ENCODE measurements at regions of chr1 and their contacts with region 1.

Region 1: DNA sequence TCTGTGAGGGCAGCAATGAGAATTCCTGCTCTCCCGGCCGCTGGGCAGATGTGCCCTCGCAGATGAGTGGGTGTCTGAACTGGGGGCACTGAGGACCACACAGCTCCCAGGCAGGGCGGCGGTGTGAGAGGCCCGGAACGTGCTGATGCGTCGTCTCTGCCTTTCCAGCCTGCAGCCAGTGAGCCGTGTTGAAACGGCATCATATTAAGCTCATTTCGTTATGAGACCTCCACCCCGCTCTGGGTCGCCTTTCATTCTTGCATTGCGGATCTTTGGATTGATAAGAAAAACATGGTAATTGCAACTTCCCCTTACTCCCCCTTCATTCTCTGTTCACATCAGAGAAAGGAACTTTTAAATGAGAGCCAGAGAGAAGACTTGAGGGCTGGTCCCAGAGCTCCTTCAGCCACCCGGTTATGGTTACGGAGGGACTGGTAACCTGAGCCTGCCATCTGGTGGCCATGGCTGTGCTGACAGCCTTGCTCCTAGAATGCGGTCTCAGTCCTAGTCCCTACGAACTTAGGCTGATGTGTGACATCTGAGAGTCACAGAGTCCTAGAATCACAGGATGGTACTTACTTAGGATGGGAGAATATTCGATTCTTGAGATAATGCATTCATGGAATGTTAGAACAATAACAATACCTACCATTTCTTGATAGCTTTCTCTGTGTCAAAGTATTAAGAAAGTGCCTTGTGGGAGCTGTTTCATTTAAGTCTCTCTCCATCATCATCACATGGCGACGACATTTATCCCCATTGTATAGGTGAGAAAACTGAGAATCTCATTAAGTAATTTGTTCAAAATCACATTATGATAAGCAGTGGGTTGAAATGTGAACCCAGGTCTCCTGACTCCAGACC is 271.0 kb downstream of the TRABD2B start:
- DNase-seq: peak; percentile 88
- H3K4me3 Mint-ChIP-seq: no peak overlapping the region
- H3K27ac Mint-ChIP-seq: no peak overlapping the region
- H3K4me1 Mint-ChIP-seq: peaks cover 3% of the 10 kb centered on the region
- H3K27me3 Mint-ChIP-seq: peaks cover 42% of the 10 kb centered on the region

Region 2: GRCh38 chr1:47388891-47389238 is 337.4 kb before region 1 on chr1:
- intact Hi-C with region 1: loop called (anchors 2 kb)
- DNase-seq: peak; percentile 82
- H3K4me3 Mint-ChIP-seq: no peak overlapping the region
- H3K27ac Mint-ChIP-seq: no peak overlapping the region
- H3K4me1 Mint-ChIP-seq: no peaks in the 10 kb centered on the region
- H3K27me3 Mint-ChIP-seq: peaks cover 10% of the 10 kb centered on the region

Region 3: GRCh38 chr1:47532921-47533792 is 193.1 kb before region 1 on chr1:
- intact Hi-C with region 1: loop called (anchors 2 kb)
- DNase-seq: peak; percentile 56
- H3K4me3 Mint-ChIP-seq: peak overlapping the region; percentile 58
- H3K27ac Mint-ChIP-seq: no peak overlapping the region
- H3K4me1 Mint-ChIP-seq: peaks cover 2% of the 10 kb centered on the region
- H3K27me3 Mint-ChIP-seq: peaks cover 46% of the 10 kb centered on the region

Region 4: GRCh38 chr1:47679301-47679791 is 46.9 kb before region 1 on chr1:
- intact Hi-C with region 1: no loop called
- DNase-seq: no peak
- H3K4me3 Mint-ChIP-seq: no peak overlapping the region
- H3K27ac Mint-ChIP-seq: no peak overlapping the region
- H3K4me1 Mint-ChIP-seq: no peaks in the 10 kb centered on the region
- H3K27me3 Mint-ChIP-seq: no peaks in the 10 kb centered on the region

Region 5: GRCh38 chr1:48019714-48020315 is 293.6 kb after region 1 on chr1:
- intact Hi-C with region 1: no loop called
- DNase-seq: no peak
- H3K4me3 Mint-ChIP-seq: no peak overlapping the region
- H3K27ac Mint-ChIP-seq: no peak overlapping the region
- H3K4me1 Mint-ChIP-seq: no peaks in the 10 kb centered on the region
- H3K27me3 Mint-ChIP-seq: peaks cover 8% of the 10 kb centered on the region